GM10248 (cell line): ENCODE measurements at regions of chr11 and their contacts with region 1.

Region 1: GRCh38 chr11:789943-790342 is at the start of gene CEND1:
- DNase-seq: peak; percentile 81
- CTCF ChIP-seq: no peak

Region 2: DNA sequence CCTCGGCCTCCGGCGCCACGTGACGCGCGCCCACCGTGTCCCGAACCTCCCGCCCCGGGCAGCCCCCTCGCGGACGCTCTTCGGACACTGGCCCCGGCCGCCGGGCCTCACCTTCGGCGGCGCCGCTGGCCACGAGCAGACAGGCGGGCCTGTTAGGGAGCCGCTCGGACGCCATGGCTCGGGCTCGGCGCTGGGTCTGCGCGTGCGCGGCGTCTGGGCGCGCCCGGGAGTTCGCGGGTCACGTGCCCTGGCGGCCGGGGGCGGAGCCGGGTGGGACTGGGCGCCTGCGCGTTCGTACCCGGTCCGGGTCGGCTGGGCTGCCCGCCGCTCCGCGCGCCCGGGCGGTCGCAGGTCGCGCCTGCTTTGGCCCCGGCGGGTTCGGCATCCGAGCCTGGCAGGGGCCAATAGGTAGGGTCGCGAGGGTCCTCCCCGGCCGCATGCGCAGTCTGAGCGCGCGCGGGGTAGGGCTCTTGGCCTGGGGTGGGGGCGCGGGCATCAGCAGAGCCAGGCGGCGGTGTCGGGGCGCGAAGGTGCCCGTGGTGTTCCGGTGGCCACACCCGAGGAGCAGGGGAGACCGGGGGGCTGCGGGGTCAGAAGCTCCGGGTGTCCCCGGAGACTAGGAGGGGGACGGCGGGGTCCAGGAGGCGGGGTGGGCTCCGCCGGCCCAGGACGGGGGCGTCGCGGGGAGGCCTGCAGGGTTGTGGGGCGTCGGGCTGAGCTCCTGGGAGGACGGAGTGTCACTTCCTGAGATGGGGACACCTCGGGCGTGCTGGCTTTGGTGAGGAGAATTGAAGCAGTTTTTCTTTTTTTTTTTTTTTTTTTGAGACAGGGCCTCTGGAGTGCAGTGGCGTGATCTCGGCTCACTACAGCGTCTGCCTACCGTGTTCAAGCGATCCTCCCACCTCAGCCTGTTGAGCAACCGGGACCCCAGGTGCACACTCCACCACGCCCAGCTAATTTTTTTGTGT is 12.4 kb before region 1 on chr11 and contains the start of gene GATD1:
- CTCF ChIA-PET with region 1: interaction called, 10 read pairs
- POLR2A ChIA-PET with region 1: no interaction called
- DNase-seq: peak; percentile 100
- CTCF ChIP-seq: no peak